Naive thymus-derived CD4-positive, alpha-beta T cell (primary cell): ENCODE measurements at regions of chr3 and their contacts with region 1.

Region 1: DNA sequence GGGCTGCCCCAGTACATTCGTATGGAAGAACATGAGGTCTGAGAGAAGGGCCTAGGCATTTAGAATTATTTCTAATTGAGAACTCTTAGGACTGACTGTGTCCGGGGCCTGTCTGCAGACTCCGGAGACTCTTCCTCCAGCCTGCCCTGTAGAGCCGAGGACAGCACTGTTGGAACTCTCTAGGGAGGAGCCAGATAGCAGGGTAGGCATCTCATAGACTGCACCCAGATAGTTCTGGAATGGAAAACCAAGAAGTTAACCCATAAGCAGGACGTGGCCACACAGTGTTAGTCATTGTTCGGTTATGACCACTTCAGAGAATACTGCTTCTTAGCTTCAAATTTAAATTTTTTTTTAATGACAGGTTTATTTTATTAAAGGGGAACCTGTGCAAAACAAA is 59.5 kb downstream of the SNRK start:
- DNase-seq: no peak
- ATAC-seq: no peak
- H3K4me3 ChIP-seq: no peak overlapping the region
- H3K4me3 Mint-ChIP-seq: peak overlapping the region in 9 of 10 donors; percentile 18 to 73 (median 64)
- H3K27ac ChIP-seq: peak overlapping the region; percentile 48
- H3K27ac Mint-ChIP-seq: peak overlapping the region; percentile 88 to 96 (median 92)
- H3K4me1 ChIP-seq: peaks cover 68 to 83% of the 10 kb centered on the region in 2 donors
- H3K4me1 Mint-ChIP-seq: peaks cover 41 to 85% (median 74%) of the 10 kb centered on the region in 7 donors
- H3K27me3 ChIP-seq: no peaks in the 10 kb centered on the region
- H3K27me3 Mint-ChIP-seq: no peaks in the 10 kb centered on the region

Region 2: GRCh38 chr3:43180027-43180426 is 165.8 kb before region 1 on chr3:
- CTCF ChIA-PET with region 1: no interaction called
- POLR2A ChIA-PET with region 1: no interaction called
- intact Hi-C with region 1: loop called in 1 of 2 experiments (anchors 5 kb)
- DNase-seq: peak in 7 of 9 donors; percentile 38 to 66 (median 61)
- ATAC-seq: peak; percentile 86
- H3K4me3 ChIP-seq: peak overlapping the region; percentile 37
- H3K4me3 Mint-ChIP-seq: peak overlapping the region; percentile 66 to 82 (median 79)
- H3K27ac ChIP-seq: peak overlapping the region; percentile 50
- H3K27ac Mint-ChIP-seq: peak overlapping the region; percentile 82 to 97 (median 93)
- H3K4me1 ChIP-seq: peaks cover 32 to 41% of the 10 kb centered on the region in 2 donors
- H3K4me1 Mint-ChIP-seq: peaks cover 47 to 76% (median 71%) of the 10 kb centered on the region in 7 donors
- H3K27me3 ChIP-seq: no peaks in the 10 kb centered on the region
- H3K27me3 Mint-ChIP-seq: no peaks in the 10 kb centered on the region

Region 3: DNA sequence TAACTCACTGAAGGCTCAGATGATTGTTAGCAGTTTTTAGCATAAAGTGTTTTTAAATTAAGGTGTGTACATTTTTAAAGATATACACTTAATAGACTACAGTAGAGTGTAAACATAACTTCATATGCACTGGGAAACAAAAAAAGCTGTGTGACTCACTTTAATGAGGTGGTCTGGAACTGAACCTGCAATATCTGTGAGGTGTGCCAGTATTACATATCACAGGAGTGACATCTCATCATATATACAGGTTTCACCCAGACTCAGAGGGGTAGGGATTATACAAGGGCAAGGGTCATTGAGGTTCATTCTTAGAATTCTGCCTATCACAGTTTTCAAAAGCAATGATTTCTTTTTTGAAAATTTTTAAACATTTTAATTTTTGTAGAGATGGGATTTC is 66.8 kb before region 1 on chr3:
- CTCF ChIA-PET with region 1: no interaction called
- POLR2A ChIA-PET with region 1: no interaction called
- intact Hi-C with region 1: no loop called
- DNase-seq: no peak
- ATAC-seq: no peak
- H3K4me3 ChIP-seq: no peak overlapping the region
- H3K4me3 Mint-ChIP-seq: no peak overlapping the region
- H3K27ac ChIP-seq: no peak overlapping the region
- H3K27ac Mint-ChIP-seq: no peak overlapping the region
- H3K4me1 ChIP-seq: no peaks in the 10 kb centered on the region
- H3K4me1 Mint-ChIP-seq: peaks cover 3 to 13% (median 7%) of the 10 kb centered on the region in 7 donors
- H3K27me3 ChIP-seq: no peaks in the 10 kb centered on the region
- H3K27me3 Mint-ChIP-seq: peaks cover 0 to 18% (median 0%) of the 10 kb centered on the region in 5 donors

Region 4: GRCh38 chr3:43326891-43327581 is 18.8 kb before region 1 on chr3:
- CTCF ChIA-PET with region 1: interaction called, 5 read pairs
- POLR2A ChIA-PET with region 1: interaction called, 9 read pairs
- intact Hi-C with region 1: loop called in 1 of 2 experiments (anchors 2 kb)
- DNase-seq: no peak
- ATAC-seq: peak; percentile 59
- H3K4me3 ChIP-seq: no peak overlapping the region
- H3K4me3 Mint-ChIP-seq: peak overlapping the region; percentile 14 to 68 (median 62)
- H3K27ac ChIP-seq: peak overlapping the region; percentile 51
- H3K27ac Mint-ChIP-seq: peak overlapping the region; percentile 51 to 91 (median 79)
- H3K4me1 ChIP-seq: peaks cover 40% of the 10 kb centered on the region in 2 donors
- H3K4me1 Mint-ChIP-seq: peaks cover 43 to 97% (median 92%) of the 10 kb centered on the region in 7 donors
- H3K27me3 ChIP-seq: no peaks in the 10 kb centered on the region
- H3K27me3 Mint-ChIP-seq: no peaks in the 10 kb centered on the region

Region 5: GRCh38 chr3:43334976-43335375 is 10.9 kb before region 1 on chr3:
- CTCF ChIA-PET with region 1: interaction called, 3 read pairs
- POLR2A ChIA-PET with region 1: interaction called, 12 read pairs
- intact Hi-C with region 1: loop called in 1 of 2 experiments (anchors 2 kb)
- DNase-seq: no peak
- ATAC-seq: no peak
- H3K4me3 ChIP-seq: no peak overlapping the region
- H3K4me3 Mint-ChIP-seq: no peak overlapping the region
- H3K27ac ChIP-seq: no peak overlapping the region
- H3K27ac Mint-ChIP-seq: peak overlapping the region in 4 of 9 donors; percentile 14 to 62 (median 28)
- H3K4me1 ChIP-seq: peaks cover 0 to 5% of the 10 kb centered on the region in 2 donors
- H3K4me1 Mint-ChIP-seq: peaks cover 5 to 36% (median 24%) of the 10 kb centered on the region in 7 donors
- H3K27me3 ChIP-seq: no peaks in the 10 kb centered on the region
- H3K27me3 Mint-ChIP-seq: no peaks in the 10 kb centered on the region

Region 6: DNA sequence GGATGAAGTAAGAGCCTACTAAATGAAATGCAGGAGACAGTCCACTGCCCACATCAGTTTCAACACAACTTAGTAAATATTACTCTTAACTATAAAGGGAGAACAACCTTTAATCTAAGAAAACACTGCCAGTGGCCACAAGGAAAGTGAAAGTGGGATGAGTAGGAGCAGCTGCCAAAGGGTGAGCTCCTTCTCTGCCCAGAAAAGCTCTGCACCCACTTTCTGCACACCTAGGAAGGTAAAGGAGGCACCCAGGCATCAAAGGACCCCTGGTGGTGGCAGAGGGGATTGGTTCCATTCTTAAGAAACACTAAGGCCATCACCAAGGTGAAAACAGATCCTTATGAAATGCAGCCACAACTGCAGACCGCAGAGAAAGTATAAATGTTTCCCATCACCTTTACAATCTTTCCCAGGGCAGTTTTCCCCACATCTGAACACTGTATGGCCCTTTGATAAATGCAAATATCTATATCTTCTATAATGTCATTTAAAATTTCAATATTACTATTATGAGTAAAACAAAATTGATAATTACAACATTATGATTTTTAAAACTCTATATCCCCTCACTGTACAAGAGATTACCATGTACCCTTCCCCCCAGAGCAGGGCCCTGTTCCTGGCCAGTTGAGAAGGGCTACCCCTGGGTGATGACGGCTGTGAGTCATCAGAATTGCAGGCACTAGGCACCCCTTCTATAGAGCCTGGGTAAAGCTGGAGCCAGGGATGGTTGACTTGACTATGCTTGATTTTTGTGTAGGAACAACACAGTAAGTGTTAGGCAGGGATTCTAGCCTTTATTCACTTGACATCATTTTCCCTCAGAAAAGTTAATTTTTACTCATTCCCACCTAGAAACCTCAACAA is 32.4 kb after region 1 on chr3:
- CTCF ChIA-PET with region 1: interaction called, 4 read pairs
- POLR2A ChIA-PET with region 1: no interaction called
- intact Hi-C with region 1: loop called in 1 of 2 experiments (anchors 1 kb)
- DNase-seq: peak; percentile 30 to 78 (median 71)
- ATAC-seq: peak; percentile 94
- H3K4me3 ChIP-seq: no peak overlapping the region
- H3K4me3 Mint-ChIP-seq: no peak overlapping the region
- H3K27ac ChIP-seq: no peak overlapping the region
- H3K27ac Mint-ChIP-seq: peak overlapping the region in 8 of 9 donors; percentile 26 to 88 (median 40)
- H3K4me1 ChIP-seq: peaks cover 6 to 10% of the 10 kb centered on the region in 2 donors
- H3K4me1 Mint-ChIP-seq: peaks cover 6 to 29% (median 19%) of the 10 kb centered on the region in 7 donors
- H3K27me3 ChIP-seq: no peaks in the 10 kb centered on the region
- H3K27me3 Mint-ChIP-seq: peaks cover 0 to 12% (median 0%) of the 10 kb centered on the region in 5 donors

Region 7: GRCh38 chr3:44729384-44729910 is 1383.6 kb after region 1 on chr3 and contains the start of gene ZNF501:
- CTCF ChIA-PET with region 1: no interaction called
- POLR2A ChIA-PET with region 1: no interaction called
- intact Hi-C with region 1: no loop called
- DNase-seq: peak; percentile 65 to 83 (median 75)
- ATAC-seq: peak; percentile 97
- H3K4me3 ChIP-seq: peak within 1 kb of the TSS; percentile 75
- H3K4me3 Mint-ChIP-seq: peak within 1 kb of the TSS; percentile 90 to 99 (median 92)
- H3K27ac ChIP-seq: peak within 1 kb of the TSS; percentile 45
- H3K27ac Mint-ChIP-seq: peak within 1 kb of the TSS; percentile 61 to 91 (median 84)
- H3K4me1 ChIP-seq: no peaks in the 10 kb centered on the region
- H3K4me1 Mint-ChIP-seq: peaks cover 2 to 20% (median 15%) of the 10 kb centered on the region in 7 donors
- H3K27me3 ChIP-seq: no peaks in the 10 kb centered on the region
- H3K27me3 Mint-ChIP-seq: no peaks in the 10 kb centered on the region
- total RNA-seq, gene ZNF501: 1.1 to 5.3 (median 2.6) TPM